ENCODE measurements at regions of chr19 and their contacts with region 1.

Region 1: GRCh38 chr19:34359140-34359953 is 5.6 kb upstream of the GPI start:
- DNase-seq: peak; percentile 85 to 96 (median 93)
- H3K4me3 ChIP-seq: peak overlapping the region; percentile 37 to 80 (median 68)
- H3K27ac ChIP-seq: peak overlapping the region; percentile 67 to 97 (median 90)
- H3K27me3 ChIP-seq: no peaks in the 10 kb centered on the region
- CTCF ChIP-seq: peak; percentile 39 to 86 (median 72)

Region 2: GRCh38 chr19:34171877-34172660 is 187.3 kb before region 1 on chr19 and contains the start of gene LSM14A:
- intact Hi-C with region 1: loop called in 1 of 2 experiments (anchors 5 kb)
- DNase-seq: peak; percentile 71 to 93 (median 82)
- H3K4me3 ChIP-seq: peak within 1 kb of the TSS; percentile 74 to 99 (median 94)
- H3K27ac ChIP-seq: peak within 1 kb of the TSS; percentile 91 to 100 (median 99)
- H3K27me3 ChIP-seq: no peaks in the 10 kb centered on the region
- CTCF ChIP-seq: peak in 14 of 56 donors; percentile 6 to 30 (median 14)
- total RNA-seq, gene LSM14A: 52.9 to 108 (median 72.5) TPM

Region 3: DNA sequence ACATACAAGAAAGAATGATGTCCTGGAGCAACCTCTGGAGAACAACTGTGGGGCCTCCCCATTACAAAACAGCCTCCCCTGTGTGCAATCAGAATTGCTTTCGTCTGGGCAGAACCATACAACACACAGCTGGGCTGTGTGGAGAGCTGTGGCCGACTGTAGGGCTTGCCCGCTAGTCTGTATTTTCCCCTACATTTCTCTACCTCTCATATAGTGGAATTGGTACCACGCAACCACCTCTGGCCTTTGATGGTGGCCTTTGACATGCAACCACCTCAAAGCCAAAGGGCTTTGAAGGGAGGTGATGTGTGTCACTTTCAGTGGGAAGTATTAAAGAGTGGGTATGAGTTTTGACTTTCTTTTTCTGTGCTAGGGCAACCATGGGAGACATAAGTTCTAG is 71.0 kb before region 1 on chr19:
- intact Hi-C with region 1: no loop called
- DNase-seq: no peak
- H3K4me3 ChIP-seq: no peak overlapping the region
- H3K27ac ChIP-seq: no peak overlapping the region
- H3K27me3 ChIP-seq: no peaks in the 10 kb centered on the region
- CTCF ChIP-seq: no peak

Region 4: GRCh38 chr19:34298891-34299520 is 60.3 kb before region 1 on chr19:
- intact Hi-C with region 1: no loop called
- DNase-seq: no peak
- H3K4me3 ChIP-seq: no peak overlapping the region
- H3K27ac ChIP-seq: no peak overlapping the region
- H3K27me3 ChIP-seq: no peaks in the 10 kb centered on the region
- CTCF ChIP-seq: no peak

Region 5: DNA sequence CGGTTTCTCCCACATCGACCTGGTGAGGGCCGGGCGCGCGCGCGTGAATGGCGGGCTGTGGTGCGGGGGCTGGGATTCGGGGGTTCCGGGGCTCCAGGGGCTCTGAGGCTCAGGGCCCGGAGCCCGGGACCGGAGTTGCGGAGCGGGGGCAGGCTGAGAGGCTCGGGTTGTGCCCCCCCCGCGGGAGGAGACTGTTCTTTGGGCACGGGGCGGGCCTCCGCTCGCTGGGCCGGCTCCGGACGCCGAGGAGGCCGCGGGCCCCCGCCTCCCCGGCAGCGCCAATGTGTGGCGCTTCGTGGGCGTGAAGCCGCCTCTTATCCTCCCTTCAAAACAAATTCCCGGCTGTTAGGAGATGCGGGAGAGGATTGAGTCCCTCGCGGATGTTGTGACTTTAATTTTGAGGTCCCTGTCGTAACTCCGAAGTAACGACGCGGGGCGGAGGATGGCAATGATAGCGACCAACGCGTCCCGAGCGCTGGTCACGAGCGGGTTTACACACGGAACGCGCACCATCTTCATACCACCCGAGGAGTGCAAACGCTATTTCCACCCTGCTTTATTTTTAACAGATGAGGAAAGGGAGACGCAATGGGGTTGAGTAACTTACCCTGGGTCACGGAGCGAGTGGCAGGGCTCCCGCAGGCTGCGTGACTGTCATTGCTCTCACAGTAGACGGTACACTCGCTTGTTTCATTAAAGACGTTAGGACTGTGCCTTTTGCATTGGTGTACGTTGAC is 69.4 kb after region 1 on chr19:
- intact Hi-C with region 1: loop called in 1 of 2 experiments (anchors 2 kb)
- DNase-seq: peak in 4 of 10 donors; percentile 24 to 53 (median 38)
- H3K4me3 ChIP-seq: peak overlapping the region; percentile 74 to 98 (median 92)
- H3K27ac ChIP-seq: peak overlapping the region in 58 of 59 donors; percentile 2 to 94 (median 87)
- H3K27me3 ChIP-seq: no peaks in the 10 kb centered on the region
- CTCF ChIP-seq: peak in 4 of 56 donors; percentile 3 to 15 (median 7)